T-cell (primary cell): ENCODE measurements at regions of chr12 and their contacts with region 1.

Region 1: GRCh38 chr12:120971299-120972179 is 6.8 kb upstream of the HNF1A start:
- DNase-seq: peak in 24 of 35 experiments; percentile 5 to 77 (median 23)
- ATAC-seq: peak; percentile 88 to 92 (median 91)
- H3K4me3 ChIP-seq: no peak overlapping the region
- H3K4me3 Mint-ChIP-seq: no peak overlapping the region
- H3K27ac ChIP-seq: no peak overlapping the region
- H3K27ac Mint-ChIP-seq: no peak overlapping the region
- H3K4me1 ChIP-seq: peaks cover 0 to 2% of the 10 kb centered on the region in 2 experiments
- H3K4me1 Mint-ChIP-seq: peaks cover 4 to 6% (median 6%) of the 10 kb centered on the region in 3 donors
- H3K27me3 ChIP-seq: no peaks in the 10 kb centered on the region
- H3K27me3 Mint-ChIP-seq: no peaks in the 10 kb centered on the region

Region 2: GRCh38 chr12:120849765-120850164 is 121.8 kb before region 1 on chr12:
- CTCF ChIA-PET with region 1: interaction called in 1 of 2 experiments, 6 read pairs
- POLR2A ChIA-PET with region 1: interaction called in 1 of 2 experiments, 10 read pairs
- DNase-seq: no peak
- ATAC-seq: no peak
- H3K4me3 ChIP-seq: no peak overlapping the region
- H3K4me3 Mint-ChIP-seq: no peak overlapping the region
- H3K27ac ChIP-seq: no peak overlapping the region
- H3K27ac Mint-ChIP-seq: no peak overlapping the region
- H3K4me1 ChIP-seq: peaks cover 16 to 26% of the 10 kb centered on the region in 2 experiments
- H3K4me1 Mint-ChIP-seq: peaks cover 72 to 75% (median 74%) of the 10 kb centered on the region in 3 donors
- H3K27me3 ChIP-seq: no peaks in the 10 kb centered on the region
- H3K27me3 Mint-ChIP-seq: no peaks in the 10 kb centered on the region

Region 3: DNA sequence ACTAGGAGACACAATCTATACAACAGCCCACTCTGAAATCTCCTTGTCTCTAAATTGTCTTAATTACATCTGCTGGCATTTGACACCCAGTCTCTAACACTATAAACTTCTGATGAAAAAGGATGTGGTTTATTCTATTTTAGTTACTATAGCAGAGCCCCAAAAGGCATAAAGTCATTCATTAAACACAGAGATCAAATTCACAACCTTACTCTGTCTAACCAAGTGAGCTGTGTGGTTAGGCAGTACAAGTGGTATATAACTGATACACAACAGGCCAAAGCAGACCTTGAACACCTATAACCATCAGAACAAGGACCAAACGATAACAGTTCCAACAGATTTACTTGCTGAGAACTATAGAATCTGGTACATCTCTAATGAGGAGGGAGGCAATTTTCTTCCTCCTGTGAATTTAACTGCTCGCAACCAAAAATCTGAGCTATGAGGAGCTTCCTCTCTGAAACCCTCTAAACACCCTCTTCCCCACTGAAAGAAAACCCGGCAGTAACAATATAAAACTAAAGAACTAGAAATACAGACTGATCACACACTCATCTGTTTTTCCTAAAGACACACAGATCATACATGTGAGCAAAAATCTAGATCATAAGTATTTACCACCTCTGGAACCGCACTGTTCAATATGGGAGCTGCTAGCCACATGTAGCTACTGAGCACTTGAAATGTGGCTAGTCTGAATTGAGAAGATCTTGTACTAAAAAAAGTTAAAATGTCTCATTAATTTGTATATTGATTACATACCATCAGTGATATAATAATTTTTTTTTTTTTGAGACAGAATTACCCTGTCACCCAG is 85.1 kb before region 1 on chr12:
- CTCF ChIA-PET with region 1: no interaction called
- POLR2A ChIA-PET with region 1: no interaction called
- DNase-seq: peak in 1 of 35 experiments; percentile 19
- ATAC-seq: peak; percentile 73 to 88 (median 75)
- H3K4me3 ChIP-seq: no peak overlapping the region
- H3K4me3 Mint-ChIP-seq: peak overlapping the region; percentile 22 to 54 (median 25)
- H3K27ac ChIP-seq: no peak overlapping the region
- H3K27ac Mint-ChIP-seq: peak overlapping the region; percentile 51 to 64
- H3K4me1 ChIP-seq: peaks cover 15 to 23% of the 10 kb centered on the region in 2 experiments
- H3K4me1 Mint-ChIP-seq: peaks cover 68 to 78% (median 71%) of the 10 kb centered on the region in 3 donors
- H3K27me3 ChIP-seq: no peaks in the 10 kb centered on the region
- H3K27me3 Mint-ChIP-seq: no peaks in the 10 kb centered on the region

Region 4: DNA sequence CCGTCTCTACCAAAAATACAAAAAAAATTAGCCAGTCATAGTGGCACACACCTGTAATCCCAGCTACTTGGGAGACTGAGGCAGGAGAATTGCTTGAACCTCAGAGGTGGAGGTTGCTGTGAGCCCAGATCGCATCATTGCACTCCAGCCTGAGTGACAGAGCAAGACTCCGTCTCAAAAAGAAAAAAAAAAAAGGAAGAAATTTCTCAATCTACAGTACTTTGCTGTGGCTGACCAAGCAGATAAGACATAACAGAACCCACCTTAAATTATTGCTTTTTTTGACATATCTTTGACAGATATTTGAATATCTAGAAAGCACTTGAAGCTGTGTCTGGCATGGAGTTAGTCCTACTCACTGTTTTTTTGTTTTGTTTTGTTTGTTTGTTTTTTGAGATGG is 28.1 kb before region 1 on chr12:
- CTCF ChIA-PET with region 1: interaction called, 11 to 14 read pairs
- POLR2A ChIA-PET with region 1: no interaction called
- DNase-seq: no peak
- ATAC-seq: no peak
- H3K4me3 ChIP-seq: no peak overlapping the region
- H3K4me3 Mint-ChIP-seq: no peak overlapping the region
- H3K27ac ChIP-seq: no peak overlapping the region
- H3K27ac Mint-ChIP-seq: no peak overlapping the region
- H3K4me1 ChIP-seq: no peaks in the 10 kb centered on the region
- H3K4me1 Mint-ChIP-seq: peaks cover 0 to 2% (median 2%) of the 10 kb centered on the region in 3 donors
- H3K27me3 ChIP-seq: peaks cover 0 to 6% of the 10 kb centered on the region in 2 experiments
- H3K27me3 Mint-ChIP-seq: peaks cover 0 to 4% of the 10 kb centered on the region in 2 donors